Naive thymus-derived CD4-positive, alpha-beta T cell (primary cell): ENCODE measurements at regions of chr7 and their contacts with region 1.

Region 1: GRCh38 chr7:150994141-150994964 is 3.5 kb downstream of the NOS3 start:
- DNase-seq: peak in 2 of 9 donors; percentile 33 to 37
- ATAC-seq: peak; percentile 65
- H3K4me3 ChIP-seq: peak overlapping the region; percentile 29
- H3K4me3 Mint-ChIP-seq: peak overlapping the region; percentile 21 to 75 (median 64)
- H3K27ac ChIP-seq: peak overlapping the region; percentile 68
- H3K27ac Mint-ChIP-seq: peak overlapping the region; percentile 31 to 87 (median 63)
- H3K4me1 ChIP-seq: peaks cover 3 to 51% of the 10 kb centered on the region in 2 donors
- H3K4me1 Mint-ChIP-seq: peaks cover 19 to 60% (median 44%) of the 10 kb centered on the region in 7 donors
- H3K27me3 ChIP-seq: no peaks in the 10 kb centered on the region
- H3K27me3 Mint-ChIP-seq: peaks cover 0 to 3% (median 0%) of the 10 kb centered on the region in 5 donors

Region 2: DNA sequence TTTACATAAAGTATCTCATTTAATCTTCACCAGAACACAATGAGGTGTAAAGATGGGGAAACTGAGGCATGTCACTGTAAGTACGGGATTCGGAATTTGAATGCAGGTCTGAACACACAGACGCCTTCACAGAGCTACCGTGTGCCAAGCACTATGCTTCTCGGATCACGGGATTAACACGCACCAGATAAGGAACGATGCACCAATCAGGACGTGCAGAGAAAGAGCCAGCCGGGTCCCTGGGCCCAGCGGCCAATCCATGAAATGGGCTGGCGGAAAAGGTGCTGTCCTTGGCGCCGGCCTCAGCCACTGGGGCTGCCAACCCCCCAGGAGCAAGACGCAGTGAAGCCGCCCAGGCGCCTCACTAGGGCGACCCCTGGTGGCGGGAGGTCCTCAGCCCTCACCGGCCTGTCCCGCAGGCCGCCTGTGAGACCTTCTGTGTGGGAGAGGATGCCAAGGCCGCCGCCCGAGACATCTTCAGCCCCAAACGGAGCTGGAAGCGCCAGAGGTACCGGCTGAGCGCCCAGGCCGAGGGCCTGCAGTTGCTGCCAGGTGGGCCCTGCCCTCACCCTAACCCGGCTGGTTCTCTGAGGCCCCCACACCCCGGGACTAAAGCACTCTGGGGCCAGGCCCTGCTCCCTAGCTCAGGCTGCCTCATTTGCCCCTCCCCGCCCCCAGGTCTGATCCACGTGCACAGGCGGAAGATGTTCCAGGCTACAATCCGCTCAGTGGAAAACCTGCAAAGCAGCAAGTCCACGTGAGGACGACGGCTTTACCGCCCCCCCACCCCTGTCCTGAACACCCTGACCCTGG is 14.4 kb after region 1 on chr7:
- CTCF ChIA-PET with region 1: interaction called, 15 read pairs
- POLR2A ChIA-PET with region 1: interaction called, 33 read pairs
- intact Hi-C with region 1: loop called in 1 of 2 experiments (anchors 1 kb)
- DNase-seq: peak; percentile 45 to 82 (median 65)
- ATAC-seq: peak; percentile 59
- H3K4me3 ChIP-seq: peak overlapping the region; percentile 62
- H3K4me3 Mint-ChIP-seq: peak overlapping the region; percentile 80 to 90 (median 85)
- H3K27ac ChIP-seq: peak overlapping the region; percentile 73
- H3K27ac Mint-ChIP-seq: peak overlapping the region; percentile 73 to 97 (median 91)
- H3K4me1 ChIP-seq: peaks cover 49 to 66% of the 10 kb centered on the region in 2 donors
- H3K4me1 Mint-ChIP-seq: peaks cover 39 to 77% (median 64%) of the 10 kb centered on the region in 7 donors
- H3K27me3 ChIP-seq: no peaks in the 10 kb centered on the region
- H3K27me3 Mint-ChIP-seq: no peaks in the 10 kb centered on the region